Heart left ventricle (tissue), 16 donors: ENCODE measurements at regions of chr2 and their contacts with region 1.

Region 1: GRCh38 chr2:88627056-88627855 is at the start of gene EIF2AK3:
- DNase-seq: peak; percentile 98 to 100 (median 99)
- ATAC-seq: peak; percentile 91 to 97 (median 96)
- H3K4me3 ChIP-seq: peak within 1 kb of the TSS; percentile 78 to 95 (median 90)
- H3K27ac ChIP-seq: peak within 1 kb of the TSS; percentile 94 to 99 (median 98)
- H3K4me1 ChIP-seq: peaks cover 0 to 51% (median 32%) of the 10 kb centered on the region in 12 donors
- H3K27me3 ChIP-seq: no peaks in the 10 kb centered on the region
- CTCF ChIP-seq: peak in 5 of 12 donors; percentile 7 to 31 (median 15)
- POLR2A ChIP-seq: peak; percentile 98
- total RNA-seq, gene EIF2AK3: 4.7 to 16.1 (median 10.9) TPM

Region 2: DNA sequence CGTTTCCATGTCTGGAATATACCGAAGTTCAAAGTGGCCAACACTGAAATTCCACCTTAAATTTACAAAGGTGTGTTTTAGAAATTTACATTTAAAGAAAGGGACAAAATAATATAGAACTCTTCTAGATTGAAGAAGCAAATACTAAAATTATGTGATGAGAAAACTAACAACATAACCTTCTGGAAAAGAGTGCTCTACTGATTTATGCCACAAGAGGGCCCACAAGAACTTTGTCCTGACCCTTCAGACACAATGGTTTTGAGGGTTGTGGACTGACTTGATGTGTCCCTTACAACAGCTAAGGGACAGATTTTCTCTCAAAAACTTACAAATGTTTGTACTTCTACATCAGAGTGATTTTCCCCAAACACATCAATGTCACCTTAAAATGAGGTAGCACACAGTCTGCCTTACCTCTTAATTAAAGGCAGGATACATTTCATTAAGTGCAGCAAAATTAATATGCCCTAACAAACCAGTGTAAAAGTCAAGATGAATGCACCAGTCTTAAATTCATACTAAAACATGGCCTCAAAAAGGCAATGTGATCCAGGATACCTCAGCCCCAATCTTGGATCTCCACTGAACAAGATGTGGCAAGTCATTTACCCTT is 36.1 kb before region 1 on chr2:
- intact Hi-C with region 1: loop called in 8 of 10 experiments (anchors 5 kb)
- DNase-seq: peak in 2 of 5 donors; percentile 39 to 46
- ATAC-seq: peak; percentile 64 to 87 (median 86)
- H3K4me3 ChIP-seq: no peak overlapping the region
- H3K27ac ChIP-seq: peak overlapping the region in 2 of 12 donors; percentile 14 to 24
- H3K4me1 ChIP-seq: peaks cover 0 to 8% (median 0%) of the 10 kb centered on the region in 12 donors
- H3K27me3 ChIP-seq: no peaks in the 10 kb centered on the region
- CTCF ChIP-seq: peak; percentile 69 to 88 (median 85)
- POLR2A ChIP-seq: no peak

Region 3: GRCh38 chr2:88600038-88600465 is 27.2 kb before region 1 on chr2:
- intact Hi-C with region 1: loop called in 2 of 10 experiments (anchors 1 kb)
- DNase-seq: peak in 4 of 5 donors; percentile 26 to 59 (median 40)
- ATAC-seq: peak; percentile 83 to 95 (median 95)
- H3K4me3 ChIP-seq: peak overlapping the region in 6 of 12 donors; percentile 0 to 17 (median 3)
- H3K27ac ChIP-seq: peak overlapping the region; percentile 19 to 89 (median 73)
- H3K4me1 ChIP-seq: peaks cover 6 to 60% (median 41%) of the 10 kb centered on the region in 12 donors
- H3K27me3 ChIP-seq: no peaks in the 10 kb centered on the region
- CTCF ChIP-seq: no peak
- POLR2A ChIP-seq: no peak

Region 4: DNA sequence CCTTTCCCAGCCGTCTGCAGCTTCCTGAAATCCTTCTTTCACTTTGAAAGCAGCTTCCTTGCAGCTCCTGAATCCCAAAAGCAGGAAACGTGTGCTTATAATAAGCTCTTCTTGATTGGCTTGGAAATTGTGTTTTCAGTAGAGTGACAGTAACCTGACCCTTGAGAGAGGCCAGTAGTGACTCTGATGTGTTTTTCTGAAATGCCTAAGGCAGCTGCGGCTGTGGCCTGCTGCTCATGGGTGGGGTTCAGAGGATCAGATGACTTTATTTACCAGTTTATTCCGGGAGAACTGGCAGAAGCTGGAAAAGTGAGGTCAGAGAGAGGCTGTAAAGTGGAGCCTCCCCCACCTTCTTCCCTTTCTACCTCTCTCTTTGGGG is 32.3 kb after region 1 on chr2:
- intact Hi-C with region 1: loop called in 3 of 10 experiments (anchors 1 to 5 kb)
- DNase-seq: peak in 3 of 5 donors; percentile 40 to 63 (median 56)
- ATAC-seq: peak; percentile 75 to 91 (median 84)
- H3K4me3 ChIP-seq: peak overlapping the region in 7 of 12 donors; percentile 4 to 37 (median 25)
- H3K27ac ChIP-seq: peak overlapping the region; percentile 68 to 87 (median 79)
- H3K4me1 ChIP-seq: peaks cover 0 to 34% (median 22%) of the 10 kb centered on the region in 12 donors
- H3K27me3 ChIP-seq: no peaks in the 10 kb centered on the region
- CTCF ChIP-seq: no peak
- POLR2A ChIP-seq: peak in 1 of 2 donors; percentile 28

Region 5: GRCh38 chr2:88669371-88670214 is 42.3 kb after region 1 on chr2:
- intact Hi-C with region 1: loop called in 4 of 10 experiments (anchors 5 kb)
- DNase-seq: peak in 1 of 5 donors; percentile 18
- ATAC-seq: peak in 3 of 4 donors; percentile 74
- H3K4me3 ChIP-seq: no peak overlapping the region
- H3K27ac ChIP-seq: no peak overlapping the region
- H3K4me1 ChIP-seq: peaks cover 0 to 7% (median 0%) of the 10 kb centered on the region in 12 donors
- H3K27me3 ChIP-seq: no peaks in the 10 kb centered on the region
- CTCF ChIP-seq: peak; percentile 44 to 72 (median 60)
- POLR2A ChIP-seq: no peak

Region 6: DNA sequence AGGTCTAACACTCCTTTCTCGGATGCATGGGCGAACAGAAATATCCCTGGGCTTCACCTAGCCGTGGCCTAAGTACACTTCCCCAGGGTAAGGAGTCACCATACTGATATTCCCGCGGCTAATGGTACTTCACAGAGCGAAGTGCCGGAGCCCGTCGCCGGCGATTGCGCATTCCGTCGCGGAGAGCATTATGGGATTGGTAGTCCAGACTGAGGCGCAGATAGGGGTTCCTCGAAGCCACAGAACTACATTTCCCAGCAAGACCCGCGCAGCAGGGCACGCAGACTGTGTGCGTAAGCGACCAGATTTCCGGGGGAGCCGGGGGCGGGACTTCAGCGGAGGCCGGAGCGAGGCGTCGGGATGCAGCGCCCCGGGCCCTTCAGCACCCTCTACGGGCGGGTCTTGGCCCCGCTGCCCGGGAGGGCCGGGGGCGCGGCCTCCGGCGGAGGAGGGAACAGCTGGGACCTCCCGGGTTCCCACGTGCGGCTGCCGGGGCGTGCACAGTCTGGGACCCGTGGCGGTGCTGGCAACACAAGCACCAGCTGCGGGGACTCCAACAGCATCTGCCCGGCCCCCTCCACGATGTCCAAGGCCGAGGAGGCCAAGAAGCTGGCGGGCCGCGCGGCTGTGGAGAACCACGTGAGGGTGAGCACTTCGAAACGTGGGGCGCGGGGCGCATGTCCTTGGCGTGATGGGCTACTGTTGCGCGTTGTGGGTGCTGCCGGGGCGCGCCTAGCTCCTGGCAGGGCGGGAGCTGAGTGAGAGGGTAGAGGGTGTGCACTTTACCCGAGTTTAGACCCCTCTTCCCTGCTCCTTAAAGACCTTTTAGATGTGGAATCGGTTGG is 64.3 kb after region 1 on chr2 and contains the start of gene RPIA:
- intact Hi-C with region 1: loop called in 2 of 10 experiments (anchors 1 to 5 kb)
- DNase-seq: peak; percentile 99 to 100 (median 100)
- ATAC-seq: peak; percentile 99 to 100 (median 99)
- H3K4me3 ChIP-seq: peak within 1 kb of the TSS; percentile 45 to 98 (median 78)
- H3K27ac ChIP-seq: peak within 1 kb of the TSS; percentile 58 to 89 (median 82)
- H3K4me1 ChIP-seq: peaks cover 2 to 40% (median 21%) of the 10 kb centered on the region in 12 donors
- H3K27me3 ChIP-seq: no peaks in the 10 kb centered on the region
- CTCF ChIP-seq: peak; percentile 65 to 92 (median 78)
- POLR2A ChIP-seq: peak in 1 of 2 donors; percentile 65
- total RNA-seq, gene RPIA: 4.1 to 15.3 (median 12.6) TPM